AG04450 (cell line): ENCODE measurements at regions of chr19 and their contacts with region 1.

Region 1: DNA sequence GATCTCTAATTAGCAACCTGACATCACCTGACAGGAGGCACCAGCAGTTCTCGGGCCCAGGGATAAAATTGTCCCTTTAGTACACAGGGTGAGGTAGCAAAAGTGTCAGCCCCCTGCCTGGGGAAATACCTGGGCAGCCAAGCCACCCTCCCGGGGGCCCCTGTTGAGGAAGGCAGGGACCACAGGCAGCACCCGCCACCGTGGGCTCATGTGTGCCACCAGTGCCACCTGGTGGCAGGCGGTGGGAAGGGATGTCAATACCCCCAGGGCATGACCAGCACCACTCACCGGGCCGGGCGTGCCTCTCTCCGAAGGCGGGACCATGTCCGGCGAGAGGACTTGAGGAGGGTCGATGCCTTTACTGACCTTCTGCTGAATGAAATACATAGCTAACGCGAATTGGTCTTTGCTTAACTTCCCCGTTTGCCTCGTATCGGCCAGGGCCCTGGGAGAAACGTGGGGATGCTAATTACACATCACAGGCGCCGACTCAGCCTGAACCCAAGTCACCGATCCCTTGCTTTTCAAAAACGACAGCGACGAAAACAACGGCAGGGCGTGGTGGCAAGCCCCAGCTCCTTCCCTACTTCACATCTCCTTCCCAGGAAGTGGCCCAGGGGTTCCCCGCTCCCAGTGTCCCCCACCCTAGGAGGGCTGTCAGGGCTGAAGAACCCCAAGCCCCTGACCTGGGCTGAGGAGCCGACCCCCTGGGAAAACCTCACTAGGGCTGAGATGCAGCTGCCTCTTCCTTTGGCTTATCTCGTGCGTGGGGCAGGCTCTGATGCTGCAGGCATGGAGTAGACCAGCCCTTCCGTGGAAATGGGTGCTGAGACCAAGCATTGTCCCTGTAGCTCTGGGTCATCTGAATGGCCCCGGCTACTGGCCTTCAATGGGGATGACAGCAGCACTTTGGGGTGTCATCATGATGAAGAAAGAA is 53.8 kb downstream of the EPS15L1 start:
- DNase-seq: no peak
- H3K4me3 ChIP-seq: no peak overlapping the region
- H3K27ac ChIP-seq: no peak overlapping the region
- H3K27me3 ChIP-seq: no peaks in the 10 kb centered on the region
- CTCF ChIP-seq: peak; percentile 79

Region 2: GRCh38 chr19:16247353-16248182 is 170.4 kb before region 1 on chr19:
- CTCF ChIA-PET with region 1: interaction called, 12 read pairs
- POLR2A ChIA-PET with region 1: no interaction called
- DNase-seq: peak; percentile 37
- H3K4me3 ChIP-seq: no peak overlapping the region
- H3K27ac ChIP-seq: no peak overlapping the region
- H3K27me3 ChIP-seq: no peaks in the 10 kb centered on the region
- CTCF ChIP-seq: peak; percentile 96

Region 3: DNA sequence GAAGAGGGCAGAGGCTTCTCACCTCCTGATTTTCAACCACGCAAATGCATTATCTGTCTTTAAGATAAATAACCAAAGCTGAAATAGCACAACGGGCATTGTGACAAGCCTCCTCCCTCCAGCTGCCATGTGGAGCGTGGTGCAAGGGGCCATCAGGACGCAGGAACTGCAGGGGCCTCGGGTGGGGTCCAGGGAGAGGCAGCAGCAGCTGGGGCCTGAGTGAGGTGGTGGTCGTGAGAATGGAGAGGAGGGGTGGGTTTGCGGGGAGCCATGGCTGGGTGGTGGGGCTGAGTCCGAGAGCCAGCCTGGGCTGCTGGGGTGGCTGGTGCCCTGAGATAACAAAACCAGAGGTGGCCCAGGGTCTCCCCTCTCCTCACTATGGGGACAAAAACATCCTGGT is 12.1 kb before region 1 on chr19:
- CTCF ChIA-PET with region 1: interaction called, 22 read pairs
- POLR2A ChIA-PET with region 1: no interaction called
- DNase-seq: no peak
- H3K4me3 ChIP-seq: no peak overlapping the region
- H3K27ac ChIP-seq: no peak overlapping the region
- H3K27me3 ChIP-seq: no peaks in the 10 kb centered on the region
- CTCF ChIP-seq: no peak

Region 4: GRCh38 chr19:16435238-16435917 is 17.4 kb after region 1 on chr19:
- CTCF ChIA-PET with region 1: interaction called, 14 read pairs
- POLR2A ChIA-PET with region 1: no interaction called
- DNase-seq: peak; percentile 84
- H3K4me3 ChIP-seq: no peak overlapping the region
- H3K27ac ChIP-seq: peak overlapping the region; percentile 80
- H3K27me3 ChIP-seq: no peaks in the 10 kb centered on the region
- CTCF ChIP-seq: no peak